A549 (cell line): ENCODE measurements at regions of chr11 and their contacts with region 1.

Region 1: DNA sequence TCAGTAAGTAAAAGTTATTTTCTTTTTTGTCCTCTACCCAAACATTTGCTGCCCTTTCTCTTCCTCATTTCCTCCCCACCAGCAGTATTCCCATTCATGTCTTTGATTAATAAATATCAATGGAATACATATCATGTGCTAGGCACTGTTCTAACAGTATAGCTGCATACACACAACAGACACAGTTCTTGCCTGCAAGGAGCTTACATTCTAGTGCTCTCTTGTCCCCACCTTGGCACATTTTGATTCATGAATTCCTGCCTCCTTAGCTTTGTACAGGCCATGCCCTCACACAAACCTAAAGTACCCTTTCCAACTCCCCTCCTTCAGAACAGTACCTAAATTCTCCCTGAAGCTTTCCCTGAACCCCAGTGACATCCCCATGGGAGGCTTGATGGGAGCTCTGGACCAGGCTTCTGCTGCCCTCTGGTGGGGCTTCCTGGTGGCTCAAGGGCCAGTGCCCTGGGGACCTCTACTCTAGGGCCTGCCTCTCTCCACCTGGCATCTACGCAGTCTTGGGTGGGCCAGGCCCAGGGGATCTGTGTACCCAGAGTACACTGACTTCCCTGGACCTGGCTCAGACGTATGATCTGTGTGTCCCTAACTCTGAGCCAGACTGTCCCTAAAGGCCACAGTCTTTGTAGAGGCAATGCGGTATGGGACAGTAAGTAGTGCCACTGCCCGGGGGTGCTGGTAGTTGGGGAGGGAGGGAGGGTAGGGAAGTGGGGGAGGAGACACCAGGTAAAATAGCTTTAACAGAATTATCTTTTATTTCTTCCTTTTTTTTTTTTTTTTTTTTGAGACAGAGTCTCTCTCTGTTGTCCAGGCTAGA is 14.1 kb downstream of the RPS13 start:
- DNase-seq: peak; percentile 54 to 57
- ATAC-seq: peak; percentile 99
- H3K4me3 ChIP-seq: no peak overlapping the region
- H3K27ac ChIP-seq: no peak overlapping the region
- H3K4me1 ChIP-seq: no peaks in the 10 kb centered on the region
- CTCF ChIP-seq: peak; percentile 89
- EP300 ChIP-seq: no peak
- POLR2A ChIP-seq: no peak
- RAD21 ChIP-seq: peak; percentile 95 to 96

Region 2: GRCh38 chr11:16785520-16786128 is 277.8 kb before region 1 on chr11:
- CTCF ChIA-PET with region 1: interaction called, 58 read pairs
- POLR2A ChIA-PET with region 1: no interaction called
- DNase-seq: peak; percentile 77 to 92
- ATAC-seq: peak; percentile 78 to 87
- H3K4me3 ChIP-seq: no peak overlapping the region
- H3K27ac ChIP-seq: no peak overlapping the region
- H3K4me1 ChIP-seq: peaks cover 15% of the 10 kb centered on the region; the same call in 2 of the 3 replicates
- CTCF ChIP-seq: peak; percentile 80
- EP300 ChIP-seq: no peak
- POLR2A ChIP-seq: no peak
- RAD21 ChIP-seq: peak; percentile 70 to 77

Region 3: GRCh38 chr11:16820324-16821092 is 242.9 kb before region 1 on chr11:
- CTCF ChIA-PET with region 1: interaction called, 31 read pairs
- POLR2A ChIA-PET with region 1: no interaction called
- DNase-seq: peak; percentile 77 to 82
- ATAC-seq: peak; percentile 86 to 90
- H3K4me3 ChIP-seq: no peak overlapping the region
- H3K27ac ChIP-seq: peak overlapping the region in 1 of 2 experiments; percentile 50; a peak in 2 of 6 replicates
- H3K4me1 ChIP-seq: peaks cover 29% of the 10 kb centered on the region
- CTCF ChIP-seq: peak; percentile 91
- EP300 ChIP-seq: no peak
- POLR2A ChIP-seq: no peak
- RAD21 ChIP-seq: peak; percentile 73 to 75

Region 4: GRCh38 chr11:16945671-16946469 is 117.5 kb before region 1 on chr11:
- CTCF ChIA-PET with region 1: interaction called, 72 read pairs
- POLR2A ChIA-PET with region 1: no interaction called
- DNase-seq: peak; percentile 74 to 76
- ATAC-seq: peak; percentile 99
- H3K4me3 ChIP-seq: no peak overlapping the region
- H3K27ac ChIP-seq: peak overlapping the region in 1 of 2 experiments; percentile 61; a peak in 3 of 6 replicates
- H3K4me1 ChIP-seq: peaks cover 12% of the 10 kb centered on the region
- CTCF ChIP-seq: peak; percentile 89
- EP300 ChIP-seq: no peak
- POLR2A ChIP-seq: no peak
- RAD21 ChIP-seq: peak; percentile 92 to 97

Region 5: GRCh38 chr11:17001871-17002270 is 61.5 kb before region 1 on chr11:
- CTCF ChIA-PET with region 1: interaction called, 12 read pairs
- POLR2A ChIA-PET with region 1: no interaction called
- DNase-seq: no peak
- ATAC-seq: no peak
- H3K4me3 ChIP-seq: no peak overlapping the region
- H3K27ac ChIP-seq: no peak overlapping the region
- H3K4me1 ChIP-seq: peaks cover 17% of the 10 kb centered on the region
- CTCF ChIP-seq: no peak
- EP300 ChIP-seq: no peak
- POLR2A ChIP-seq: no peak
- RAD21 ChIP-seq: no peak

Region 6: GRCh38 chr11:17021511-17021910 is 41.9 kb before region 1 on chr11:
- CTCF ChIA-PET with region 1: interaction called, 22 read pairs
- POLR2A ChIA-PET with region 1: no interaction called
- DNase-seq: no peak
- ATAC-seq: no peak
- H3K4me3 ChIP-seq: no peak overlapping the region
- H3K27ac ChIP-seq: peak overlapping the region in 1 of 2 experiments; percentile 61; a peak in 1 of 6 replicates
- H3K4me1 ChIP-seq: peaks cover 33% of the 10 kb centered on the region
- CTCF ChIP-seq: no peak
- EP300 ChIP-seq: no peak
- POLR2A ChIP-seq: no peak
- RAD21 ChIP-seq: no peak

Region 7: GRCh38 chr11:17129003-17129402 is 65.6 kb after region 1 on chr11:
- CTCF ChIA-PET with region 1: no interaction called
- POLR2A ChIA-PET with region 1: no interaction called
- DNase-seq: peak in 1 of 2 experiments; percentile 22
- ATAC-seq: peak; percentile 62 to 70; a peak in 4 of 6 replicates
- H3K4me3 ChIP-seq: no peak overlapping the region
- H3K27ac ChIP-seq: no peak overlapping the region
- H3K4me1 ChIP-seq: peaks cover 7% of the 10 kb centered on the region; the same call in 2 of the 3 replicates
- CTCF ChIP-seq: no peak
- EP300 ChIP-seq: no peak
- POLR2A ChIP-seq: no peak
- RAD21 ChIP-seq: no peak